Left cardiac atrium (tissue), 4 donors: ENCODE measurements at regions of chr3 and their contacts with region 1.

Region 1: DNA sequence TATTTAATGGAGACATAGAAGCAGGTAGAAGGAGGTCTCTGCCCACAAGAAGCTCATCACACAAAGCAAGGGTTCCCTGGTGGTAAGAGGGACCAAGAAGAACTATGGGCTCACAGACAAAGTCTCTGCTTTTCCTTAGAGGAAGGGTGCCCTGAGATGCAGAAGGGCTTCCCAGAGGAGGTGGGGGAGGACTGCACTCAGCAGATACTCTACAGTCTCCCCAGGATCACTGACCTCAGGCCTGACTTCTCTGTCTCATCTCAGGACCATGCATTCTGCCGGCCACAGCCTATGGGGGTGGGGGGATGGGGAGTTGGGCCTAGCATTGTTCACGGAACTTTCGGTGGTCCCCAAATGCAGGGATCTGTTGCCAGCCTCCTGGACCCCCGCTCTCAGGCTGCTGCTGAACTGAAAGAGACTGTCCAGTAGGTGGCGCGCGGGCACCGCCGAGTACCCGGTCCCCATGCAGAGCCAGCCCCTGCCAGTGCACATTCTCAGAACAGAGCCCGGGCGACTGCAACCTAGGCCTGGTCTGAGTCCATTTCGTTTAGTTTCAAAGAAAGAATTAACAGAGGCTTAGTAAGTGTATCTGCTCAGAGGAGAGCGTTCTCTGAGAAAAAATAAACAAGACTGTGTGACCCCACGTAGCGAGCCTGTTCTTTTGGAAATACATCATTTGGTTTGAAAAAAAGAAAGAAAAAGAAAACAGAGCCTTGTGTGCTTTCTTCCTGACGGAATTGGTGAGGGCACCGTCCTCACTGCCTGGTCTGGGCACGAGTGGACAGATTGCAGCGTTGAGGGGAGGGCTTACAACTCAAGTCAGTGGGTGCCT is 74.1 kb downstream of the LRTM1 start:
- DNase-seq: peak; percentile 84
- ATAC-seq: peak; percentile 92 to 93

Region 2: DNA sequence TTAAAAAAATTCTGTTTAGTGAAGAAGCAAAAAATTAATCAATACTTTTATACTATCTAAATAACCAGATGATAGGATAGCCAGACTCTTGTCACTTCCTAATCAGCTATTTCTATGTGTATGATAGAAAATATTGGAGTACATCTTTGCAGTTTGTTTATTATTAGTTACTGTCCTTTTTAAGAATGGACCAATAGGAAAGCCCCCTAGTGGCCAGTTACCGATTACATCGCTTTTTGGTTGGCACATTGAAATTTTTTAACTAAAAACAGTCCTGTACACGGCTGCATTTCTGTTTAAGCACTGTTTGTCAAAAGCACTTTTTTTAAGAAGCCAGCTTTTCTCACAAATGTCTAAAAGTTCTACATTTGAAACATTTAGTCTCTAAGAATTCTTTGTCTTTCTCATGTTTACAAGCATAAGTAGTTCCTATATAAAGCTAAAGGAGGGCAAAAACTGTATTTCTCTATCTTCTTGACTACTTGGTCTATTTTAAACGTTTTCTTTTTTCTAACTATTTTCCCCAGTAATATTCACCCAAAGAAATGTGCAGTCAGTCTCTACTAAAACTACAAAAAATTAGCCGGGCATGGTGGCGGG is 327.2 kb after region 1 on chr3:
- intact Hi-C with region 1: loop called in 1 of 2 experiments (anchors 10 kb)
- DNase-seq: peak; percentile 29
- ATAC-seq: no peak

Region 3: GRCh38 chr3:56055482-56056350 is 1201.9 kb after region 1 on chr3:
- intact Hi-C with region 1: loop called in 1 of 2 experiments (anchors 10 kb)
- DNase-seq: no peak
- ATAC-seq: no peak